ENCODE measurements at regions of chr11 and their contacts with region 1.

Region 1: GRCh38 chr11:103055221-103055890 is 36.6 kb downstream of the DCUN1D5 start:
- DNase-seq: peak in 5 of 9 donors; percentile 3 to 19 (median 4)
- ATAC-seq: peak; percentile 47
- H3K4me3 ChIP-seq: no peak overlapping the region
- H3K4me3 Mint-ChIP-seq: no peak overlapping the region
- H3K27ac ChIP-seq: no peak overlapping the region
- H3K27ac Mint-ChIP-seq: no peak overlapping the region
- H3K4me1 ChIP-seq: no peaks in the 10 kb centered on the region
- H3K4me1 Mint-ChIP-seq: no peaks in the 10 kb centered on the region
- H3K27me3 ChIP-seq: no peaks in the 10 kb centered on the region
- H3K27me3 Mint-ChIP-seq: no peaks in the 10 kb centered on the region

Region 2: DNA sequence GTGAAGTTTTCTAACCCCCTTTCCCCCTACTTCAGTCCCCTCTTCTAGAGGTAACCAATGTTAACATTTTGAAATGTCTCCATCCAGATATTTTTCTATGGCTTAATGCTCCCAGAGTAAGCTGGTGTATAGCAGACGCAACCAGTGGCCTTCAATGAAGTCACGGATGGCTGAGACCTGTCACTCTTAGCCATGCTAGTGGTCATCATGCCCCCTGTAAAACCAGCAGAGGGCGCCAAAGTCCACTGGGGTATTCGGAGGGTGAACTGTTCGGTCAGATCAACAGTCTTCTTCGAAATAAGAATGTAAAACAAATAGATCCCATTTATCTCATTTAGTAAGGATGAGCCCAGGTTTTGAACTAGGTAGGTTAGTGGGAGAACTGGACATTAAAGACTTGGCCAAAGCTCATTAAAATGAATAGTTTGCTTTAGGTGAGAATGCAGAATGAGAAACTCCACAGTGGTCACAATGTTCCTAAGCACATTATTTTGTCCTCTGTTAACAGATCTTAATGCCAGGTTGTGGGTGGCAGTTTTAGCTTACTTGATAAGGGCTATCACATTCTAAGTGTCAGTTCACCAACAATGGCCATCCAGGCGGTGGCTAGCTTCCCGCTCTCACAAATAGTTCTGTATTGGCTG is 322.0 kb before region 1 on chr11:
- CTCF ChIA-PET with region 1: no interaction called
- POLR2A ChIA-PET with region 1: no interaction called
- intact Hi-C with region 1: loop called in 1 of 2 experiments (anchors 2 kb)
- DNase-seq: peak in 1 of 9 donors; percentile 45
- ATAC-seq: peak; percentile 66
- H3K4me3 ChIP-seq: no peak overlapping the region
- H3K4me3 Mint-ChIP-seq: no peak overlapping the region
- H3K27ac ChIP-seq: no peak overlapping the region
- H3K27ac Mint-ChIP-seq: no peak overlapping the region
- H3K4me1 ChIP-seq: no peaks in the 10 kb centered on the region
- H3K4me1 Mint-ChIP-seq: no peaks in the 10 kb centered on the region
- H3K27me3 ChIP-seq: peaks cover 0 to 3% of the 10 kb centered on the region in 2 donors
- H3K27me3 Mint-ChIP-seq: peaks cover 18 to 38% (median 28%) of the 10 kb centered on the region in 5 donors

Region 3: GRCh38 chr11:102914238-102915043 is 140.9 kb before region 1 on chr11:
- CTCF ChIA-PET with region 1: no interaction called
- POLR2A ChIA-PET with region 1: no interaction called
- intact Hi-C with region 1: loop called in 1 of 2 experiments (anchors 10 kb)
- DNase-seq: no peak
- ATAC-seq: no peak
- H3K4me3 ChIP-seq: no peak overlapping the region
- H3K4me3 Mint-ChIP-seq: no peak overlapping the region
- H3K27ac ChIP-seq: no peak overlapping the region
- H3K27ac Mint-ChIP-seq: no peak overlapping the region
- H3K4me1 ChIP-seq: no peaks in the 10 kb centered on the region
- H3K4me1 Mint-ChIP-seq: no peaks in the 10 kb centered on the region
- H3K27me3 ChIP-seq: no peaks in the 10 kb centered on the region
- H3K27me3 Mint-ChIP-seq: peaks cover 7 to 17% (median 12%) of the 10 kb centered on the region in 5 donors

Measured in naive thymus-derived CD4-positive, alpha-beta T cell (primary cell).